Vagina (tissue), 2 donors: ENCODE measurements at regions of chr6 and their contacts with region 1.

Region 1: DNA sequence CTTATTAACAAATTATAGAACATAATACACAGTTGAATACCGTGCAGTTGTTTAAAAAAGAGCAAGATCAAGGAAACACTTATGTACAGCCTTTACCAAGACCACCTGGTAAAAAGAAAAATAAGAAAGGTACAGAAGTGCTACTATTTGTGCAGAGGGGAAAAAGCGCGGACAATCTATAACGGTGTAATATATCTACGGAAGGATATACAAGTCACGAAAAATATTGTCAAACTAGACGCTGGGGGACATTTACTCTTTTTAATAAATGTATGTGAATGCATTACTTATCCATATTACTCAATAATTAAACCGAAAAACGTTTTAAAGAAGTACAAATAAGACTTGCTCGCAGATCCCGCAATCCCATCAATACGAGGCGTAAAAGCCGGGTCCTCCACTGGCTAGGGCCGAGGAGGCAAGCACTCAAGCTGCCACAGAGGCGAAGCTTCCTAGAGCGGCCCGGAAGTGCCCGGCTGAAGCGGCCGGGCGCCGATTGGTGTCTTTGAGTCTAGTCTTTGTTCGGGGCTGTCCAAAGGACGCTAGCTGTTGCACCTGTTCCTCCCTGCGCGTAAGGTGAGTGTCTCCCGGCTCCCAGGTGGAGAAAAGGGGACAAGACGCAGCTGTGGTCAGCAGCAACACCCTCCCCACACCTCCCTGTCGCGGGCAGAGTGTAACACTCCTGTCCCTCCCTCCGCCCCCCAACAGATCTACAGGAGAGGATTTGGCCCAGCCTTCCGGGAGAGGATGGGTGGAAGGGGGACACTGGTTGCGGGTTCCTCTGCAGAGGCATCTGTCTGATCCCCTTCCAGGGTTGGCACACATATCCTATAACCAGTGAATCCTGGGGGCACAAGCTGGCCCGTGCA is at the start of gene ZSCAN16:
- DNase-seq: no peak
- H3K4me3 ChIP-seq: peak within 1 kb of the TSS; percentile 58 to 60
- H3K27ac ChIP-seq: peak within 1 kb of the TSS; percentile 46
- H3K4me1 ChIP-seq: peaks cover 14% of the 10 kb centered on the region
- H3K27me3 ChIP-seq: no peaks in the 10 kb centered on the region
- CTCF ChIP-seq: no peak
- POLR2A ChIP-seq: no peak
- total RNA-seq, gene ZSCAN16: 1.2 TPM

Region 2: GRCh38 chr6:27495386-27496135 is 628.8 kb before region 1 on chr6:
- intact Hi-C with region 1: loop called (anchors 5 kb)
- DNase-seq: no peak
- H3K4me3 ChIP-seq: peak overlapping the region; percentile 41 to 45
- H3K27ac ChIP-seq: no peak overlapping the region
- H3K4me1 ChIP-seq: peaks cover 11% of the 10 kb centered on the region
- H3K27me3 ChIP-seq: no peaks in the 10 kb centered on the region
- CTCF ChIP-seq: no peak
- POLR2A ChIP-seq: no peak

Region 3: GRCh38 chr6:28225056-28225834 is 100.9 kb after region 1 on chr6 and contains the start of gene ZSCAN9:
- intact Hi-C with region 1: loop called (anchors 10 kb)
- DNase-seq: no peak
- H3K4me3 ChIP-seq: peak within 1 kb of the TSS; percentile 80 to 82
- H3K27ac ChIP-seq: peak within 1 kb of the TSS; percentile 74
- H3K4me1 ChIP-seq: peaks cover 17% of the 10 kb centered on the region
- H3K27me3 ChIP-seq: no peaks in the 10 kb centered on the region
- CTCF ChIP-seq: no peak
- POLR2A ChIP-seq: no peak
- total RNA-seq, gene ZSCAN9: 11.3 TPM

Region 4: GRCh38 chr6:28355743-28356665 is 231.7 kb after region 1 on chr6:
- intact Hi-C with region 1: loop called (anchors 10 kb)
- DNase-seq: no peak
- H3K4me3 ChIP-seq: peak overlapping the region; percentile 61 to 64
- H3K27ac ChIP-seq: peak overlapping the region; percentile 89
- H3K4me1 ChIP-seq: peaks cover 40% of the 10 kb centered on the region
- H3K27me3 ChIP-seq: no peaks in the 10 kb centered on the region
- CTCF ChIP-seq: peak; percentile 59 to 89 (median 69)
- POLR2A ChIP-seq: no peak

Region 5: DNA sequence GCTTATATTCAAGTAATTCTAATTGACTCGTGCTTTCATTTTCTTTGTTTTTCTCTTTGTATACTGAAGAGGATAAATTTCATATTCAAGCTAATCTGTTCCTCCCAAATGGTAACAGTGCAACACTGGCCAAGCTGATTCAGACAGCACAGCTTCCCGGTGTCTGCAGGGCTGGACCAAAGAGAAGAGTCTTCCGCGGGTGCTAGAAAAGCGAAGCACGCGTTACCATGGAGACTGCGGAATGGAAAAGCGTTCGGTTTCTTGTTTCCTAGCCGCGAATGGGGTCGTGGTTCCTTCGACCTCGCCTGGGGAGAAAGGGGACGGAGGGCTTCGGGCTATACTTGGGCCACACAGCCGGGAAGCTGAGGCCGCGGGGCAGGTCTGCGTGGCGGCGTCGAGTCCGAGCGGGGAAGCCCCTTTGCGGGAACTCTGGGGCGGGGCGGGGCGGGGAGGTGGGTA is 887.0 kb after region 1 on chr6:
- intact Hi-C with region 1: no loop called
- DNase-seq: no peak
- H3K4me3 ChIP-seq: peak overlapping the region; percentile 47 to 51
- H3K27ac ChIP-seq: no peak overlapping the region
- H3K4me1 ChIP-seq: peaks cover 12% of the 10 kb centered on the region
- H3K27me3 ChIP-seq: no peaks in the 10 kb centered on the region
- CTCF ChIP-seq: no peak
- POLR2A ChIP-seq: no peak